ENCODE measurements at regions of chr3 and their contacts with region 1.

Region 1: DNA sequence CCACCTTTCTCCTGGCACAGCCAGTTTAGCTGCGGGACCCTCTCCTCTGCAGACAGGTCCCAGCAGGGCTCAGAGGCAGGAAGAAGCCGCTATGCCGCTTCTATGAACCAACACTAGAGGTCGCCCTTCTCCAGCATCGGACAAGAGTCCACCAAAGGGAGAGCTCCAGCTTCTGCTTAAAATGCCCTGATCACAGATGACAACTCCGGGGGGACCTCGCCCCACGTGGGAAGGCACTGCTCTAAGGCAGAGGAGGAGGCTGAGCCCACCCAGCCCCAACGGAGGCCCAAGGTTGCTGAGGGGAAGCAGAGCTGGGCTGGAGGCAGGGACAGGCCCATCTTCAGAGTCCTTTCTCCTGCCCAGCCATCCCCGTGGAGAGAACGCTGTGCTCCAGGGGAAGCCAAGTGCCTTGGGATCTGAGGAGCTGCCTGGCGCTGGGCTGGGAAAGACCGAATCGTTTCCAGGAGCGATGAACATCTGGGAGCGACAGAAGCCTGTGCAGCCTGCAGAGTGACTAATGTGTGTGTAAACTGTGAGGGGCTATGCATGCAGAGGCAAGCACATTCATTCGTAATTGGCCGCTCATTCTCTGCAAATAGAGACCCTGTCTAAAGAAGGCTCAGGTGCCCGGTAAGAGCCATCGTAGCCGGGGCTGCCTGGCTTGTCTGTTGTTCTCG is 43.5 kb upstream of the BDH1 start:
- DNase-seq: peak; percentile 85
- ATAC-seq: peak; percentile 96
- H3K4me3 Mint-ChIP-seq: no peak overlapping the region
- H3K27ac Mint-ChIP-seq: no peak overlapping the region
- H3K4me1 Mint-ChIP-seq: peaks cover 18% of the 10 kb centered on the region
- H3K27me3 Mint-ChIP-seq: peaks cover 2% of the 10 kb centered on the region; the same call in 1 of the 2 replicates
- CTCF ChIP-seq: peak; percentile 77; the same call in 1 of the 2 replicates

Region 2: DNA sequence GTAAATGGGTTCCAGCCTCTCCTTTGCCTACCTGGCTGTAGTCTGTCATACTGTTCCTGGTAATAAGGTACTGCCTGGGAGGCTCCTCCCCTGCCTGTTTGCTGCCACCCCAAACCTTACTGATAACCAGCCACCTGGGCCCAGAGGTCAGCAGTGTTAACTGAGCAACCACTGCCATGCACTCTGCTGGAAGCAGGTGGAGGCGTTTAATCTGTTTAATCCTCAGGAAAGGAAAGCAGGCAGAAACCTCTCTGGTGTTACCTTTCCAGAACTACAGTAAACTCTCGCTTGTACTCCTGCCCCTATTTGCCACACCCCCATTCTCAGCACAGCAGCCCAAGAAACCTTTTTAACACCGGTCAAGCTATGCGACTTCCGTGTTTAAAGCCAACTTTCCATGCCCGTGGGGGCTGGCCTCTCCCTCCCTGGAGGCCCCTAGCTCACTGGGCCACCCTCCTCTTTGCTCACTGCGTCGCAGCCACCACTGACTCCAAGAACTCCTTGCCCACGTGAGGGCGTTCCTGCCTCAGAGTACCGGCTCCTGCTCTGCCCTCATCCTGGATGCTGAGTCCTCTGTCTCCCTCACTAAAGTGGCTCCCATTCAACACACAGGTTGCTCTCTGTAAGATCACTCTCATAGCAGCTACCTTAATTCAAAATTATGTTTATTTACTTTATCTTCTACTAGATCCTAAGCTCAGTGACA is 51.8 kb before region 1 on chr3:
- CTCF ChIA-PET with region 1: interaction called, 44 read pairs
- POLR2A ChIA-PET with region 1: no interaction called
- DNase-seq: peak; percentile 68
- ATAC-seq: peak; percentile 88
- H3K4me3 Mint-ChIP-seq: no peak overlapping the region
- H3K27ac Mint-ChIP-seq: peak overlapping the region; percentile 40
- H3K4me1 Mint-ChIP-seq: peaks cover 57% of the 10 kb centered on the region
- H3K27me3 Mint-ChIP-seq: no peaks in the 10 kb centered on the region; the same call in 1 of the 2 replicates
- CTCF ChIP-seq: no peak

Region 3: GRCh38 chr3:197567904-197568681 is 31.1 kb before region 1 on chr3:
- CTCF ChIA-PET with region 1: interaction called, 29 read pairs
- POLR2A ChIA-PET with region 1: no interaction called
- DNase-seq: no peak
- ATAC-seq: peak; percentile 77
- H3K4me3 Mint-ChIP-seq: no peak overlapping the region
- H3K27ac Mint-ChIP-seq: no peak overlapping the region; the same call in 1 of the 2 replicates
- H3K4me1 Mint-ChIP-seq: peaks cover 35% of the 10 kb centered on the region
- H3K27me3 Mint-ChIP-seq: peaks cover 21% of the 10 kb centered on the region
- CTCF ChIP-seq: no peak

Region 4: DNA sequence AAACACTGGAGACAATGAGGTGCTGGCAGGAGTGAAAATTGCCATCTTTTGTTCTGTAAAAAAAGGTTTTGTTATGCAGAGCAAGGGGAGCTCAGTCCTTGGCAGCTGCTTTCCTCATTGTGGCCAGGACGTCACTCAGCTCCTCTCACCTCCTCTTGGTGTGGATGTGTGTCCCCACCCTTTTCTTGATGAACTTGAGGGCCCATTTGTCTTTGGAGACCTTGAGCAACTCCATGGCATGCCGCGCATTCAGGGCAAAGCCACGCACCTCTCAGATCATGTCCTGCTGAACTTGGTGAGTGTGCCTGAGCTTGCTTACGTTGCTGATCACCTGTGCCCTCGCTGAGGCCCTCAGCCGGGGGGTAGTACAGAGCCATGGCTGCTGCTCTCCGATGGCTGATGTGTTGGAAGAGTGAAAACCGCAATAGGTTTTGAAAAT is 19.0 kb before region 1 on chr3:
- CTCF ChIA-PET with region 1: interaction called, 44 read pairs
- POLR2A ChIA-PET with region 1: interaction called, 3 read pairs
- DNase-seq: peak; percentile 43
- ATAC-seq: peak; percentile 85
- H3K4me3 Mint-ChIP-seq: no peak overlapping the region
- H3K27ac Mint-ChIP-seq: peak overlapping the region; percentile 82
- H3K4me1 Mint-ChIP-seq: peaks cover 63% of the 10 kb centered on the region
- H3K27me3 Mint-ChIP-seq: no peaks in the 10 kb centered on the region
- CTCF ChIP-seq: no peak

Measured in WTC11 (cell line).